ENCODE measurements at regions of chr4 and their contacts with region 1.

Region 1: DNA sequence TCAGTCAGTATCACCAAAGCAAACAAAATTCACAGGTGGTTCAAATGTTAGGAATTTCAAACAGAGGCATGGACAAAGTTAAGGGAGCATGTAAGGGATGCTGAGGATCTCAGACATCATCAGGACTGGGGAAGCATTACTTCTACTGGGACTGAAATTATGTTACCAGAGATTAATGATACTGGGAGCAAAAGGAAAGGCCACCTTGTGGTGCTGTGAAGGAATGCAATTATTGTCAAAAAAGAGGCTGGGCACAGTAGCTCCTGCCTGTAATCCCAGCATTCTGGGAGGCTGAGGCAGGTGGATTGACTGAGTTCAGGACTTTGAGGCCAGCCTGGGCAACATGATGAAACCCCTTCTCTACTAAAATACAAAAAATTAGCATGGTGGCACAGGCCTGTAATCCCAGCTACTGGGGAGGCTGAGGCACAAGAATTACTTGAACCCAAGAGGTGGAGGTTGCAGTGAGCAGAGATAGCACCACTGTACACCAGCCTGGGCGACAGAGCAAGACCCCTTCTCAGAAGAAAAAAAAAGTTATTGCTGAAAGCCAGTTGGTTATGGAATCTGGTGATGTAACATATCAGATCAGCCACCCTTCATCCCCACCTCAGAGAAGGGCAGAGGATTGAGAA is 954.3 kb downstream of the PCDH7 start:
- DNase-seq: peak; percentile 54
- ATAC-seq: peak; percentile 54; the same call in 1 of the 2 replicates
- H3K4me3 ChIP-seq: no peak overlapping the region
- H3K27ac ChIP-seq: no peak overlapping the region
- H3K4me1 ChIP-seq: no peaks in the 10 kb centered on the region
- H3K27me3 ChIP-seq: no peaks in the 10 kb centered on the region
- CTCF ChIP-seq: peak; percentile 53

Region 2: GRCh38 chr4:31107362-31107761 is 567.1 kb before region 1 on chr4:
- CTCF ChIA-PET with region 1: no interaction called
- POLR2A ChIA-PET with region 1: interaction called, 12 read pairs
- intact Hi-C with region 1: no loop called
- DNase-seq: no peak
- ATAC-seq: no peak
- H3K4me3 ChIP-seq: no peak overlapping the region
- H3K27ac ChIP-seq: no peak overlapping the region
- H3K4me1 ChIP-seq: peaks cover 3% of the 10 kb centered on the region; the same call in 1 of the 2 replicates
- H3K27me3 ChIP-seq: no peaks in the 10 kb centered on the region
- CTCF ChIP-seq: no peak